MCF 10A (cell line): ENCODE measurements at regions of chr5 and their contacts with region 1.

Region 1: DNA sequence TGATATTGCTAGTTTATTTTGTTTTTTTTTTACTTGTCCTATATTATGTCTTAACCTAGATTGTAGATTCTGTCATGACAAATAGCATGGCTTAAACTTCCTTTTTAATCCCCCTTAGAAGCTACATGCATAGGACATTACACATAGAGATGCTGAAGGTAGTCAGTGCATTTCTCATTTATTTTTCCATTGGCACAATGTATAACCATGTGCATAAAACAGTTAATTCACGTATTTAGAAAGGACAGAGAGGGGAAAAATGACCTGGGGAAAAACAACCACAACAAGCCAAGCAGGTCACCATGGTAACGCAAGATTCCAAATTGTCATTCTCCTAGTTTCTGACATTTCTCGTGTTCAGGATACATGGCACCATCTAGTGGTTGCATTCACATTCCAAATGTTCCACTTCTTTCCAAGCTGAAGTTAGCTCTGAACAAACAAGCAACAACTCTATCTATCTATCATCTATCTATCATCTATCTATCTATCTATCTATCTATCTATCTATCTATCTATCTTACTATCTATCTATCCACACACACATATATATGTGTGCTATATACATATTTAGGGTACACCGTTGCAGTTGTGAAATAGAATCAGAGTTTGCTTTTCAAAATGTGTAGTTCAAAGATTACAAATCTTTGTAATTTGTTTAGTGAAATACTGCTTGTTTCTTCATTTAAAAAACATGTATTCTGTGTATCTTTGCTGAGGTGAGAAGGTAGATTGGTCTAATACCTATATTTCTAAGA is 487.2 kb upstream of the ST8SIA4 start:
- DNase-seq: peak; percentile 58
- H3K4me3 Mint-ChIP-seq: no peak overlapping the region
- H3K27ac Mint-ChIP-seq: no peak overlapping the region
- H3K4me1 Mint-ChIP-seq: no peaks in the 10 kb centered on the region
- H3K27me3 Mint-ChIP-seq: peaks cover 11% of the 10 kb centered on the region
- CTCF ChIP-seq: peak; percentile 60

Region 2: GRCh38 chr5:100430268-100431195 is 959.8 kb before region 1 on chr5:
- CTCF ChIA-PET with region 1: interaction called, 6 read pairs
- POLR2A ChIA-PET with region 1: no interaction called
- intact Hi-C with region 1: loop called (anchors 1 kb)
- DNase-seq: peak; percentile 65
- H3K4me3 Mint-ChIP-seq: no peak overlapping the region
- H3K27ac Mint-ChIP-seq: no peak overlapping the region
- H3K4me1 Mint-ChIP-seq: no peaks in the 10 kb centered on the region
- H3K27me3 Mint-ChIP-seq: no peaks in the 10 kb centered on the region
- CTCF ChIP-seq: peak; percentile 82

Region 3: DNA sequence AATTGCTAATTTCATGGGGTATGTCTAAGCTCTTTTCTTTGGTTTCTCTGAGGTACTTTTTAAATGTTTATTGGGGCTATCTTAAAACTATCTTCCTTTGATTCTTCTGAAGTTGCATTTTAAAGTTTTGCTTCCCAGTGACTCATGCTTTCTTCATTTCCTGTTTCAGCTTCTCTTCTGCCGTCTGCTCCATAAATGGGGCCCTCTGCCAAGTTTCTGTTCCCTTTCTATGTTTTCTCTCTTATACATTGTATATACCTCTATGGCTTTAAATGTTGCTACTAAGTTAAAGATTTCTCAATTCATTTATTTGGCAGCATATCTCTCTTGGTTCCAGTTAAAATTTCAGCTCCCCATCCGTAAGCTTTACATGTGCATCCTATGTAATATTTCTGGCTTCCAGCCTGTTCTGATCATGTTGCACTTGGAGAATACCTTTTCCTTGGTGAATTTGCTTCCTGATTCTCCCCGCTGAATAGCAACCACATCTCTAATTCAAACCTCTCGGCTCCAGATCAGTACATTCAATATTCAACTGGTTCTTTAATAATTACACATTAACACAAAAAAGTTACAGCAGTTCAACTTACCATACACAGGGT is 612.5 kb before region 1 on chr5:
- CTCF ChIA-PET with region 1: interaction called, 10 read pairs
- POLR2A ChIA-PET with region 1: no interaction called
- intact Hi-C with region 1: no loop called
- DNase-seq: peak; percentile 95
- H3K4me3 Mint-ChIP-seq: peak overlapping the region; percentile 55
- H3K27ac Mint-ChIP-seq: peak overlapping the region; percentile 86
- H3K4me1 Mint-ChIP-seq: peaks cover 19% of the 10 kb centered on the region
- H3K27me3 Mint-ChIP-seq: no peaks in the 10 kb centered on the region
- CTCF ChIP-seq: no peak

Region 4: GRCh38 chr5:101574017-101574416 is 183.7 kb after region 1 on chr5:
- CTCF ChIA-PET with region 1: no interaction called
- POLR2A ChIA-PET with region 1: no interaction called
- intact Hi-C with region 1: no loop called
- DNase-seq: no peak
- H3K4me3 Mint-ChIP-seq: no peak overlapping the region
- H3K27ac Mint-ChIP-seq: no peak overlapping the region
- H3K4me1 Mint-ChIP-seq: no peaks in the 10 kb centered on the region
- H3K27me3 Mint-ChIP-seq: peaks cover 14% of the 10 kb centered on the region
- CTCF ChIP-seq: no peak

Region 5: DNA sequence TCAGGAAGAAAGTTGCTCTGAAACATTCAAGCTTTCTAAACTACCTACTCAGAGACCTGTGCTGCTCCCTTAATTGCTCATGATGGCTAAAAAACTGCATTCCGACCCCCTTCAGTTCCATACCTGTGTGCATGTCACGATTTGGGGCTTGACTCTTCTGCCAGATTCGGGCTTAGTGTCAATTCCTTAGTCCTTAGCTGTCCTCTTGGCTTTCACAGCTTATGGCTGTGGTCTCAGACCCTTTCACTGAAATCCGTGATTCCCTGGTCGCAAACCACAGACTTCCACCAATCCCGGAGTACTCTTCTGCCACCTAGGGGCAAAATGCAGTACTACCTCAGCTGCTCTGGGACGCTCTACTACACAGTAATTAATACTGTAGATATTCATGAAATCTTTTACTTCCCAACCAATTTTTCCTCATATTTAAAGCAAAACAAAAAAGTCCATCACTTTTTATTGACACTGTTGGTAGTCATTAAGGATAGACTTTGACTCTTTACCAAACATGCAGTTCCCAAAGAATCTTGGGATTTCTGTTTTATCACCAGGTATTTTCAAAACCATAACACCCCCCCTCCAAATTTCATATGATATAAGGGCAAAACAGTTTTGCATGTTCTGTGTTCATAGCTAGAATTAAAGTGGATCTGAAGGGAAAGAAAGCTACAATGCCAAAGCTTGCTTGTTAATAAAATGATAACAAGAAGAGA is 288.3 kb after region 1 on chr5:
- CTCF ChIA-PET with region 1: interaction called, 18 read pairs
- POLR2A ChIA-PET with region 1: no interaction called
- intact Hi-C with region 1: loop called (anchors 5 kb)
- DNase-seq: peak; percentile 66
- H3K4me3 Mint-ChIP-seq: no peak overlapping the region
- H3K27ac Mint-ChIP-seq: no peak overlapping the region
- H3K4me1 Mint-ChIP-seq: peaks cover 27% of the 10 kb centered on the region
- H3K27me3 Mint-ChIP-seq: peaks cover 24% of the 10 kb centered on the region
- CTCF ChIP-seq: peak; percentile 89